Vagina (tissue), 2 donors: ENCODE measurements at regions of chr1 and their contacts with region 1.

Region 1: DNA sequence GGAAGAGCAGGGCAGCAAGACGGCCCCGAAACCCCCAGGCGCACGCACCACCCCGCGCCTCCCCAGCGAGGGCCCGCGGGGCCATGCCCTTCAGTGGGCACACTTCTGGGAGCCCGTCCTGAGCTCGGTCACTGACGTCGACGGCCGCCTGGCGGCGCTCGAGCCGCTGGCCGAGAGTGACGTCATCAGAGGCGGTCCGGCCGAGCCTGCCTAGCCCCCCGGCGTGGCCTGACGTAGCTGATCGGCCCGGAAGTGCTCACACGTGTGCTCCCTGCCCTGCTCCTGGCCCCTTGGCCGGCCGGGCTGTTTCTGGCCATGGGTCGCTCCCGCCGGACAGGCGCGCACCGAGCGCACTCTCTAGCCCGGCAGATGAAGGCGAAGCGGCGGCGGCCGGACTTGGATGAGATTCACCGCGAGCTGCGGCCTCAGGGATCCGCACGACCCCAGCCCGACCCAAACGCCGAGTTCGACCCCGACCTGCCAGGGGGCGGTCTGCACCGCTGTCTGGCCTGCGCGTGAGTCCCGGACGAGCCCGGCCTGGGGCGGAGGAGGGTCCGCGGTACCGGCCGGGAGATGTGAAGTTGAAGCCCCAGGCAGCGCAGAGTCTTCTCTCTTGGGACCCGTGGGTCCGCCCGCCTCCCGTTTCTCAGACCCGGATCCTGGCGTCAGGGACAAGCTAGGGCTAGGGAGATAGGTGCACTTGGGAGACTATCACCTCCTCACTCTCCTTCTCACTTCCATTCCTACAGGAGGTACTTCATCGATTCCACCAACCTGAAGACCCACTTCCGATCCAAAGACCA is at the start of gene ZNF593:
- DNase-seq: no peak
- H3K4me3 ChIP-seq: peak within 1 kb of the TSS; percentile 70 to 96
- H3K27ac ChIP-seq: peak within 1 kb of the TSS; percentile 60
- H3K4me1 ChIP-seq: peaks cover 17% of the 10 kb centered on the region
- H3K27me3 ChIP-seq: no peaks in the 10 kb centered on the region
- CTCF ChIP-seq: peak; percentile 73 to 90 (median 87)
- POLR2A ChIP-seq: no peak
- total RNA-seq, gene ZNF593: 18.7 TPM

Region 2: GRCh38 chr1:26035959-26036755 is 133.7 kb before region 1 on chr1:
- intact Hi-C with region 1: loop called (anchors 10 kb)
- DNase-seq: no peak
- H3K4me3 ChIP-seq: peak overlapping the region; percentile 75 to 79
- H3K27ac ChIP-seq: peak overlapping the region; percentile 85
- H3K4me1 ChIP-seq: peaks cover 13% of the 10 kb centered on the region
- H3K27me3 ChIP-seq: no peaks in the 10 kb centered on the region
- CTCF ChIP-seq: peak; percentile 98 to 99 (median 98)
- POLR2A ChIP-seq: no peak